Breast epithelium (tissue), 4 donors: ENCODE measurements at regions of chr17 and their contacts with region 1.

Region 1: DNA sequence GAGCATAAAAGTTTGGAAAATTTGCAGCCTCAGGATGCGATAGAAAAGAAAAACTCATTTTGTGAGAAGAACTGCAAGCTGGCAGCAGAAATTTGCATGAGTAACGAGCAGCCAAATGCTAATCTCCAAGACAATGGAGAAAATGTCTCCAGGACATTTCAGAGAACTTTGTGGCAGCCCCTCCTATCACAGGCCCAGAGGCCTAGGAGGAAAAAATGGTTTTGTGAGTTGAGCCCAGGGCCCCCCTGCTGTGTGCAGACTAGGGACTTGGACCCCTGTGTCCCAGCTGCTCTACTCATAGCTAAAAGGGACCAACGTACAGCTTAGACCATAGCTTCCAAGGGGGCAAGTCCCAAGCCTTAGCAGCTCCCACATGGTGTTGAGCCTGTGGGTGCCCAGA is 34.3 kb downstream of the APPBP2 start:
- DNase-seq: no peak
- H3K4me3 ChIP-seq: no peak overlapping the region
- H3K27ac ChIP-seq: no peak overlapping the region
- H3K4me1 ChIP-seq: no peaks in the 10 kb centered on the region
- H3K27me3 ChIP-seq: no peaks in the 10 kb centered on the region
- CTCF ChIP-seq: no peak
- POLR2A ChIP-seq: no peak

Region 2: DNA sequence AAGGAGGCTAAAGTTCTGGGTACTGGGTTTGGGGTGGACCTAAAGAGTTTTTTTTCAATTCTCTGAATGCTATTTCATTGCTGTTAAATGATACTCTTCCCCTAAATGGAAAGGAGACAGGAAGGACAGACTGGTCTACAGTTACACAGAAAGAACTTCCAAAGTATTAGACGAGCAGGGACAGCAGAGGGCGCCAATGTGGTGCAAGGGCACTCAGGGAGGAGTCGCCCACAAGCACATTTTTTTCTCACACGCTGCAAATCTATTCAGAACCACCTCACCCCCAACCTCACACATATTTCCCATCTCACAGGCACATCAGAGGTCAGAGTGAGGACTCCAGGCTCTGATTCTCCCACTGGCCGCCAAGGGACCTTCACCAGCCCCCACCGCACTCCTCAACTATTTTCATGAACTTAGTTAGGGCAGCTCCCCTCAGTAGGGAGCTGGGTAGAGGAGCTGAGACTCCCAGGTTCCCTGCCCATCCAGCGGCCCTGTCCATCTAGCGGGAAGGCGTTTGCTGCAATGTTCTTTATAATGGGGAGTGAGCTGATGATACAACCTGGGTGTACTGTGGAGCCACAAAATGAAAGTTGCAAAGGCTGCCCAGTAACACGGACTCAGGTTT is 348.8 kb before region 1 on chr17:
- intact Hi-C with region 1: no loop called
- DNase-seq: peak; percentile 44 to 78
- H3K4me3 ChIP-seq: no peak overlapping the region
- H3K27ac ChIP-seq: no peak overlapping the region
- H3K4me1 ChIP-seq: peaks cover 0 to 9% of the 10 kb centered on the region in 2 donors
- H3K27me3 ChIP-seq: peaks cover 17 to 62% of the 10 kb centered on the region in 2 donors
- CTCF ChIP-seq: peak; percentile 37 to 63 (median 49)
- POLR2A ChIP-seq: no peak

Region 3: DNA sequence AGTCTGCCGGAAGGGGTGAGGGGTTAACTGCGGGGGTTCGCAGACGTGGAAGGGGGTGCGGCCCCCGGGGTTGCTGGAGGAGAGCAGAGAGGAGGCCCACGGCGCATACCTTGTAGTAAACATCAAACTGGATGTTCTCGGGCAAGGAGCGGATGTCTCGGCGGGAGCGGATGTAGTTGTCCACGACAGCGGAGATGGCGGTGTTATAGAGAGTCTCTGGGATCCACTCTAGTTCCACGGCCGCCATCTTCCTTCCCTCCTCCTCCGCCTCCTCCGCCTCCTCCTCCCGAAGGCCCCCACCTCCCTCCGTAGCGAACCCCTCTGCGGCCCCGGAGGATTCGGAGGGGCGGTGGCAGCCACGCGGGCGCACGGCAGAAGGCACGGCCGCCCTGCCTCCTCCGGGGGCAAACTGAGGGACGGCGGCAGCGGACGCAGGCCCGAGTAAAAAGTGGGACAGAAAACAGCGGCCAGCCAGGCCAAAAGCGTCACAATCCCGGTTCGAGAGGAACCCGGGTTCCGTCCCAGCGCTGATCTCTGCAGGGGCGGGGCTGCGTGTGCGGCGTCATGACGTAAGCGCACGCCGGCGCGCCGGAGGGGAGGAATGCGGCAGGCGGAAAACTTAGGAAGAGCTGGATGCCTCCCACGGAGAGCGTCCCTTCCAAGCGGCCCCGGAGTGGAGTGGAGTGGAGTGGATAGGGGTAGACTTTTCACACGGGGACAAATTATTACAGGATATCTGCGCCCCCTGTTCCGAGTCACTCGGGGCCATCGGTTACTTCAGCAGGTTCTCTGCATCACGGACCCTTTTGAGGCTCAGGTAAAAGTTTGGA is 34.1 kb after region 1 on chr17 and contains the start of gene APPBP2:
- intact Hi-C with region 1: loop called (anchors 1 kb)
- DNase-seq: peak; percentile 79 to 89
- H3K4me3 ChIP-seq: peak within 1 kb of the TSS; percentile 80 to 90 (median 83)
- H3K27ac ChIP-seq: peak within 1 kb of the TSS; percentile 97 to 99
- H3K4me1 ChIP-seq: no peaks in the 10 kb centered on the region
- H3K27me3 ChIP-seq: no peaks in the 10 kb centered on the region
- CTCF ChIP-seq: no peak
- POLR2A ChIP-seq: peak; percentile 87
- total RNA-seq, gene APPBP2: 26.6 to 41.9 (median 30.2) TPM